IMR-90 (cell line): ENCODE measurements at regions of chr10 and their contacts with region 1.

Region 1: GRCh38 chr10:102835007-102835482 is 2.2 kb downstream of the CYP17A1 start:
- DNase-seq: peak; percentile 71
- ATAC-seq: peak; percentile 99
- H3K4me3 ChIP-seq: no peak overlapping the region
- H3K27ac ChIP-seq: no peak overlapping the region
- H3K4me1 ChIP-seq: no peaks in the 10 kb centered on the region
- H3K27me3 ChIP-seq: peaks cover 19% of the 10 kb centered on the region
- CTCF ChIP-seq: peak; percentile 90
- POLR2A ChIP-seq: no peak
- RAD21 ChIP-seq: peak; percentile 98

Region 2: DNA sequence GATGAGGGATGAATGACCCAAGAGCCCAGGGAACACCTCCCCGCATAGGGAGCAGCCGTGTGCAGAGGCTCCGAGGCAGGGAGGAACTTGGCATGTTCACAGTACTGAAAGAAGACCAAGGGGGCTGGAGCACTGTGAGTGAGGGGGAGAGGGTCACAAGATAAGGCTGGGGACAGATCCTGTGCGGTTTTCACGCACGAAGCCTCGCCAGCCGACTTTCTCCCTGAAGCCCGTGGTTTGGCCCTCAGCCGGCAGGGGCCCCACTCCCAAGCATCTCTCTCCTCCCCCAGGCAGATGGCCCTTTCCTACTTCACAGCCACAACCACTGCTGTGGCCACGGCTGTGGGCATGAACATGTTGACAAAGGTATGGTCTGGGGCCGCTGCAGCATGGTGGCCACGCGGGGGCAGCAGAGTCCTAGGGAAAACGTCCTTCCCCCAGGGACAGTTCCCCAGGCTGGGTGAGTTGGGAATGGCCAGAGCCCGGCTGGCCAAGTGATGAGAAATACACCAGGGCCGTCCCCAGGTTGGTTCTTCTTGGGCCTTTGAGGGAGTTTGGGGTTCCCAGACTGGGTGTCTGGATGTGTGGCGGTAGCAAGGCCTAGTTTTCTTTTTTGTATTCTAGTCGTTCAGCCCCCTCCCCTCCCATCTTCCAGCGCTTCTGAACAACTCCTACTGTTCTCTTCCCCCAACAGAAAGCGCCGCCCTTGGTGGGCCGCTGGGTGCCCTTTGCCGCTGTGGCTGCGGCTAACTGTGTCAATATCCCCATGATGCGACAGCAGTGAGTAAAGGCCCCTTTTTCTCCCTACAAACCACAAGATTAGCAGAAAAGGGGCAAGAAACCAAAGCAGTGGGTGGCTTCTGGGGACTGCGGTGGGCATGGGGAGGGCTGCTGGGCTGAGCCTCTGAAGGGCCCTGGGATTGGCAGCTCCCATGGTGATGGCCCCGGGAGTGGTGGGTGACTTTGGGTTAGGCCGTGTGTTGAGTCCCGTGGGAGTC is 105.7 kb before region 1 on chr10:
- CTCF ChIA-PET with region 1: no interaction called
- POLR2A ChIA-PET with region 1: no interaction called
- dilution Hi-C with region 1: no loop called
- in situ Hi-C with region 1: loop called (anchors 5 kb)
- intact Hi-C with region 1: loop called (anchors 1 kb)
- DNase-seq: peak; percentile 73
- ATAC-seq: peak; percentile 100
- H3K4me3 ChIP-seq: no peak overlapping the region
- H3K27ac ChIP-seq: no peak overlapping the region
- H3K4me1 ChIP-seq: peaks cover 2% of the 10 kb centered on the region; the same call in 1 of the 2 replicates
- H3K27me3 ChIP-seq: no peaks in the 10 kb centered on the region
- CTCF ChIP-seq: peak; percentile 97
- POLR2A ChIP-seq: no peak
- RAD21 ChIP-seq: peak; percentile 99

Region 3: GRCh38 chr10:102904346-102904745 is 69.3 kb after region 1 on chr10:
- CTCF ChIA-PET with region 1: interaction called, 14 read pairs
- POLR2A ChIA-PET with region 1: no interaction called
- dilution Hi-C with region 1: no loop called
- in situ Hi-C with region 1: loop called (anchors 5 kb)
- intact Hi-C with region 1: loop called (anchors 1 kb)
- DNase-seq: no peak
- ATAC-seq: no peak
- H3K4me3 ChIP-seq: no peak overlapping the region
- H3K27ac ChIP-seq: no peak overlapping the region
- H3K4me1 ChIP-seq: no peaks in the 10 kb centered on the region
- H3K27me3 ChIP-seq: no peaks in the 10 kb centered on the region
- CTCF ChIP-seq: no peak
- POLR2A ChIP-seq: no peak
- RAD21 ChIP-seq: no peak

Region 4: DNA sequence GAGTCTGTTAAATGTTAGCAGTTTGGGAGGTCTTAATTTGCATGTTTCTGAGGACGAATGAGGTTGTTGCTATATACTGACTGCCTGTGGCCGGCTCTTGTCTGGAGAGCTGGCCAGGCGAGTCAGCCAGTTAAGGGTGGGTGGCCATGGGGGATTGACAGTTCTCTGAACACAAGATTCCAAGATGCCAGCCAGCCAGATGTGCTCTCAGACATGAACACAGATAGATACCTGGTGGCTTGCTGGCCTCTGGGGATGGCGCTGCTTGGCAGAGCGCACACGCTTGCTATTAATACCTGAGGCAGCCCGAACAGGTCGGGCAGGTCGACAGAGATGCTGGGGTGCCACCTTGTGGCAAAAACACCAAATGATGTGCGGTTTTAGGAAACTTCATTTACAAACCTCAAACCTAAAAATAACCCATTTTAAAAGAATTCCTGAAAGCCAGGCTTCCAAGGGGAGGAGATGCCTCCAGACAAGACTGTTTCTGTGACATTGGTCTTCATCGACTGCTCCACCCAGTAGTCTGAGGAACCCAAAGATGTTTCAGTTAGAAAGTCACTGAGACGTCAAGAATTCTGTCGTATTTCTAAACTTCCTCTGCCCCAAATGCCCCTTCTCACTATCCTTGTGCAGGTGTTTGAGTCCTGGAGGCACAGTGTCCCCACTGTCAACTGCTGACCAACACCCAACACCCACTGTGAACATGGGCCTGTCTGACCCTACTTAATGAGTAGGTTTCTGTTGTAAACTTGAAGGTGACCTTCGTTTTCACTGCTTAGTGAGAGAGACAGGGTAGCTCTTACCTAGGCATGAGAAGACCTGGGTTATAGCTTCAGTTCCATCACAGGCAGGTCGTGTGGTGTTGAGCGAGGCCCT is 234.6 kb after region 1 on chr10:
- CTCF ChIA-PET with region 1: no interaction called
- POLR2A ChIA-PET with region 1: no interaction called
- dilution Hi-C with region 1: no loop called
- in situ Hi-C with region 1: loop called (anchors 5 kb)
- intact Hi-C with region 1: loop called (anchors 2 kb)
- DNase-seq: peak; percentile 68
- ATAC-seq: peak; percentile 72
- H3K4me3 ChIP-seq: no peak overlapping the region
- H3K27ac ChIP-seq: no peak overlapping the region
- H3K4me1 ChIP-seq: peaks cover 4% of the 10 kb centered on the region; the same call in 1 of the 2 replicates
- H3K27me3 ChIP-seq: no peaks in the 10 kb centered on the region
- CTCF ChIP-seq: peak; percentile 79
- POLR2A ChIP-seq: no peak
- RAD21 ChIP-seq: peak; percentile 89

Region 5: DNA sequence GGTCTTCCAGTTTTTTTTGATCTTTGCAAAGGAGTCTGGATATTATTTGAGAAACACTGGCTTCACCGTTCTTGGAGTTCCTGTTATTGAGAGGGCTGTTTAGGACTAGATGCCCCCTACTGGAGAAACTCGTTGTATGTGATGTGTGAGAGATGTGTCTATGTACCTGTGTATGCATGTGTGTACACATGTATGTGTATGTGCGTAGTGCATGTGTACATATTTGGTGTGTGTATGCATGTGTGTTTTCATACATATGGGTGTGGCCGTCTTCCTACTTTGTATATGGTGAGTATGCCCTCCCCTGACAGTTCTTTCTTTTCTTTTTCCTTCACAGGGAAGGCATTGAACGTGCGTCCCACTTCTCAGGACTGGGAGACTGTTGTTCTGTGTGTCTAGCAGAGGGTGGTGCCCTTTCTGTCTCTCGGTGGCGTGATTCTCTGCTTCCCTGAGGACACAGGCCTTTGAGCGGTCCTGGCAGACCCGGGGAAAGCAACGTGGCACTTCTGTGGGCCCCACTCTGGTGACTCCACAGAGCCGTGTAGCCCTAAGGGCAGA is 647.0 kb after region 1 on chr10:
- CTCF ChIA-PET with region 1: no interaction called
- POLR2A ChIA-PET with region 1: no interaction called
- dilution Hi-C with region 1: no loop called
- in situ Hi-C with region 1: no loop called
- intact Hi-C with region 1: loop called (anchors 10 kb)
- DNase-seq: peak; percentile 69
- ATAC-seq: peak; percentile 76
- H3K4me3 ChIP-seq: no peak overlapping the region
- H3K27ac ChIP-seq: no peak overlapping the region
- H3K4me1 ChIP-seq: no peaks in the 10 kb centered on the region; the same call in 1 of the 2 replicates
- H3K27me3 ChIP-seq: peaks cover 23% of the 10 kb centered on the region
- CTCF ChIP-seq: peak; percentile 59
- POLR2A ChIP-seq: no peak
- RAD21 ChIP-seq: peak; percentile 48

Region 6: DNA sequence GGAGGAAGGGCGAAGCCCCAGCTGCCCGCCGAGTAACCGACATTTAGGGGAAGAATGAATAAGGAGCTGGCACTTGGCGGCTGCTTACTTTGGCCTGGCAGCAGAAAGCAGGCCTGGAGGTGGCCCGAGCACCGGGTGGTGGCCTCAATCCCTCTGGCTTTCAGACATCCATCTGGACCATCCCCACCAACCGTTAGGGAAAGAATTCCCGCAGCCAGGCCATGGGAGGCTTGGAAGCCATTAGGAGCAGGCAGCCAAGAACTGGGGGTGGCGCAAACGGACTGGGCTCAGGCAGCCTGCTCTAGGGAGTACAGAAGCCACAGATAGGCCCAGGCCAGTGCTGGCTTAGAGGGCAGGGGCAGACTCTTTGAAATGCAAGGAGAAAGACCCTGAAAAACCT is 791.1 kb after region 1 on chr10:
- CTCF ChIA-PET with region 1: no interaction called
- POLR2A ChIA-PET with region 1: no interaction called
- dilution Hi-C with region 1: no loop called
- in situ Hi-C with region 1: no loop called
- intact Hi-C with region 1: no loop called
- DNase-seq: no peak
- ATAC-seq: no peak
- H3K4me3 ChIP-seq: no peak overlapping the region
- H3K27ac ChIP-seq: no peak overlapping the region
- H3K4me1 ChIP-seq: peaks cover 2% of the 10 kb centered on the region; the same call in 1 of the 2 replicates
- H3K27me3 ChIP-seq: no peaks in the 10 kb centered on the region
- CTCF ChIP-seq: no peak
- POLR2A ChIP-seq: no peak
- RAD21 ChIP-seq: no peak